ENCODE measurements at regions of chr17 and their contacts with region 1.

Region 1: DNA sequence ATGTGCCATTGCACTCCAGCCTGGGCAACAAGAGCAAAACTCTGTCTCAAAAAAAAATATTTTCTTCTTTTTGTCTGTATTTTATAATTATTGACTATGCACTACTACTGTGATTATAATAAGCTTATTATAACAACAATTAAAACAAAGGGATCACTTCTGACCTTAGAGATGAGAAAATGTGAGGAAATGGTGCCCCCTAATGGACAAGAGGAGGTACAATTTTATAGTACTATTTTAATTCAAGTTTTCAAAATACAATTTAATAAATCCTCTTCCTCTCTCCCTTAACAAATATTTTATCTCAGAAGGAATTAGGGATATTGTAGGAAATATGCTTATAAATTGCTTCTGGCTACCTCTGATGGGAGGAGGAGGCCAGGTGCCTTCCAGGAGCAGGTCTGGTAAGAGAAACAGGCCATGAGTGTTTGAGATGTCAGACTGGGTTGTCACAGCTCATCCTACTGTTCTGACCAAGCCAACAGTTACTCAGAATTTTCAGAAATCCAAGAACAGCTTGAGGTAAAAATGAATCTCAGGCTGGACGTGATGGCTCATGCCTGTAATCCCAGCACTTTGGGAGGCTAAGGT is 14.0 kb downstream of the VPS53 start:
- DNase-seq: peak; percentile 59
- ATAC-seq: no peak
- H3K4me3 ChIP-seq: no peak overlapping the region
- H3K4me3 Mint-ChIP-seq: no peak overlapping the region
- H3K27ac ChIP-seq: no peak overlapping the region
- H3K27ac Mint-ChIP-seq: no peak overlapping the region
- H3K4me1 ChIP-seq: no peaks in the 10 kb centered on the region
- H3K4me1 Mint-ChIP-seq: no peaks in the 10 kb centered on the region
- H3K27me3 ChIP-seq: no peaks in the 10 kb centered on the region
- H3K27me3 Mint-ChIP-seq: no peaks in the 10 kb centered on the region
- CTCF ChIP-seq: peak; percentile 83

Region 2: DNA sequence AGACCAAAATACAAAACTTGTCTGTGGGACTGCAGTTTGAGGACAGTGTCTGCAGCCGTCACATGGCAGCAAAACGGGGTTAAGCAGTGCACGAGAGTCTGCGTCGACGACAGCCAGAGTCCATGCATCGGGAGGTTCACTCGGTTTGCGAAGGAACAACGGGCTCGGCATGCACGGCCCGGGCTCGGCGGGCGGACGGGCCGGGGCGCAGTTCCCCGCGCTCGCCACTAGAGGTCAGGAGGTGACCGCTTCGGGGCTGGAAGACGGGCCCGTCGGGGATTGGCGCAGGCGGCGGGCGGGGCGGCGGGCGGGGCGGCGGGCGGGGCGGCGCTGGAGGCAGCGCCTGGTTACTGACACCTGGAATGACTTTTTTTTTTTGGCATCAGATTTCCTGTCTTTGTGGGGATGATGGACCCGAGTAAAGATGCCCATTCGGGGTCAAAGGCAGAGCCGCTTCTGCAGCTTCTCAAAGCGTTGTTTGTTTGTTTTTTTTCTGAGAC is 556.8 kb before region 1 on chr17:
- CTCF ChIA-PET with region 1: interaction called, 11 read pairs
- POLR2A ChIA-PET with region 1: no interaction called
- intact Hi-C with region 1: loop called (anchors 5 kb)
- DNase-seq: peak; percentile 82
- ATAC-seq: peak; percentile 99
- H3K4me3 ChIP-seq: no peak overlapping the region
- H3K4me3 Mint-ChIP-seq: no peak overlapping the region
- H3K27ac ChIP-seq: no peak overlapping the region
- H3K27ac Mint-ChIP-seq: no peak overlapping the region
- H3K4me1 ChIP-seq: peaks cover 0 to 3% of the 10 kb centered on the region in 2 donors
- H3K4me1 Mint-ChIP-seq: peaks cover 3% of the 10 kb centered on the region
- H3K27me3 ChIP-seq: no peaks in the 10 kb centered on the region
- H3K27me3 Mint-ChIP-seq: peaks cover 3% of the 10 kb centered on the region
- CTCF ChIP-seq: peak; percentile 89

Region 3: GRCh38 chr17:409848-410545 is 290.6 kb before region 1 on chr17:
- CTCF ChIA-PET with region 1: interaction called, 128 read pairs
- POLR2A ChIA-PET with region 1: interaction called, 4 read pairs
- intact Hi-C with region 1: no loop called
- DNase-seq: peak; percentile 100
- ATAC-seq: peak; percentile 82
- H3K4me3 ChIP-seq: peak overlapping the region; percentile 31 to 92 (median 75)
- H3K4me3 Mint-ChIP-seq: peak overlapping the region; percentile 92
- H3K27ac ChIP-seq: peak overlapping the region; percentile 61 to 88
- H3K27ac Mint-ChIP-seq: peak overlapping the region; percentile 97
- H3K4me1 ChIP-seq: peaks cover 20 to 22% of the 10 kb centered on the region in 2 donors
- H3K4me1 Mint-ChIP-seq: peaks cover 39% of the 10 kb centered on the region
- H3K27me3 ChIP-seq: peaks cover 0 to 6% (median 2%) of the 10 kb centered on the region in 4 experiments
- H3K27me3 Mint-ChIP-seq: peaks cover 9% of the 10 kb centered on the region
- CTCF ChIP-seq: no peak

Region 4: DNA sequence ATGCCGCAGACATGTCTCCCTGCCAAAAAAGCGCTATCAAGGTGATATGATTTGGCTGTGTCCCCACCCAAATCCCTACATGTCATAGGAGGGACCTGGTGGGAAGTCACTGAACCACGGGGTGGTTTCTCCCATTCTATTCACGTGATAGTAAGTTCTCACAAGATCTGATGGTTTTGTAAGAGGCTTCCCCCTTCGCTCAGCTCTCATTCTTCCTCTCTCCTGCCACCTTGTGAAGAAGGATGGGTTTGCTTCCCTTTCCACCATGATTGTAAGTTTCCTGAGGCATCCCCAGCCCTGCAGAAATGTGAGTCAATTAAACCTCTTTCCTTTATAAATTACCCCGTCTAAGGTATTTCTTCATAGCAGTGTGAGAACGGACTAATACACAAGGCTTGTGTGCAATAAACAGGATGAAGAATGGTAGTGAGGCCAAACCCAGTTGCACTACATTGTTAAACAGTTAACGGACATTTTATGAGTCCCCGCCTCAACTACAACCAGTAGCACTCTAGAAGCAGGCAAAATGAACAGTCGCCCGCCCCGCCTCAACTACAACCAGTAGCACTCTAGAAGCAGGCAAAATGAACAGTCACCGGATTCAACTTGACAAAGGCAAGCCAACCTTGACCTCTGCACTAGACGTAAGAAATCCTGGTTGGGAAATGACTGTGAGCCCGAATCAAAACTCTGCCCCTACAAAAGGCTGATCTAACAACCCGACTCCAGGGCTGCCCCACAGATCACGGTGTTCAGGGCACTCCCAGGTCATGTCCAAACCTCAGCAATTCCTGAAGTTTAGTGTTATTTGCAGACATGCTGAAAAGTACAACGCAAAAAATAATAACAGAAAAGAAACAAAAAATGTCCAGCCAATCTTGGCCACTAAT is 12.3 kb before region 1 on chr17:
- CTCF ChIA-PET with region 1: interaction called, 25 read pairs
- POLR2A ChIA-PET with region 1: no interaction called
- intact Hi-C with region 1: no loop called
- DNase-seq: peak; percentile 28
- ATAC-seq: no peak
- H3K4me3 ChIP-seq: no peak overlapping the region
- H3K4me3 Mint-ChIP-seq: no peak overlapping the region
- H3K27ac ChIP-seq: no peak overlapping the region
- H3K27ac Mint-ChIP-seq: no peak overlapping the region
- H3K4me1 ChIP-seq: peaks cover 0 to 3% of the 10 kb centered on the region in 2 donors
- H3K4me1 Mint-ChIP-seq: peaks cover 3% of the 10 kb centered on the region
- H3K27me3 ChIP-seq: no peaks in the 10 kb centered on the region
- H3K27me3 Mint-ChIP-seq: no peaks in the 10 kb centered on the region
- CTCF ChIP-seq: no peak

Region 5: GRCh38 chr17:841313-841712 is 140.7 kb after region 1 on chr17:
- CTCF ChIA-PET with region 1: no interaction called
- POLR2A ChIA-PET with region 1: no interaction called
- intact Hi-C with region 1: no loop called
- DNase-seq: peak; percentile 25
- ATAC-seq: no peak
- H3K4me3 ChIP-seq: no peak overlapping the region
- H3K4me3 Mint-ChIP-seq: no peak overlapping the region
- H3K27ac ChIP-seq: no peak overlapping the region
- H3K27ac Mint-ChIP-seq: no peak overlapping the region
- H3K4me1 ChIP-seq: no peaks in the 10 kb centered on the region
- H3K4me1 Mint-ChIP-seq: no peaks in the 10 kb centered on the region
- H3K27me3 ChIP-seq: peaks cover 0 to 15% (median 4%) of the 10 kb centered on the region in 4 experiments
- H3K27me3 Mint-ChIP-seq: peaks cover 17% of the 10 kb centered on the region
- CTCF ChIP-seq: no peak